AG04450 (cell line): ENCODE measurements at regions of chr9 and their contacts with region 1.

Region 1: DNA sequence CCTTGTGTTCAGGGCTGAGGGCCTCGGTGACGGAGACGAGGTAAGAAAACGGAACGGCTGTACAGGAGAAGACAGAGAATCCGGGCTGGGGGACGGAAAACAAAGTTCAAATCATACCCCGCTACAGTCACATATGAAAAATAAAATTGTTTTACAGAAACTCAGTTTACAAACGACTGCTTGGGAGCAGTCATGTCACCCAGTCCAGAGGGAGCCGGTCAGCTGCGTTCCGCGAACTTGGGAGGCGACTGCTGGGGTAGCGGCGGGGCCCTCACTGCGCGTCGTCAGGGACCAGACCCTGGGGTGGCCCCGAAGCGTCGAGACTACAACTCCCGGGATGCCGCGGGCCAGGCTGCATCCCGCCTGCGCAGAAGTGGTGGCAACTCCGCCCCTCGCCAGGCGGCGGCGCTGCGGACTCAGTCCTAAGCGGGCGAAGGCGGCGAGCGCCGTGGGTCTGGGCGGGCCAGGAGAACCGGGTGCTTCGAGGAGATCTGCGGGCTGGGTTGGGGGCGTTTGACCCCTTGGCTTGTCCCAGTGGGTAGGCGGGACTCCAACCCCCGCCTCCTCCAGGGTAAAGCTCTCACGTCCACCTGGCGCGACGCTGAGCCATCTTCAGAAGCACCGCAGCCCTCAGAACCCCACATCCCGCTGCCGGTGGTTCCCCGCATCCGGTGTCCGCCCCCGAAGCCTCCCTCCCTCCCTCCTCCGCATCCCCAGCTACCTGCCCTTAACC is 4.0 kb downstream of the SIT1 start:
- DNase-seq: peak; percentile 66
- H3K4me3 ChIP-seq: peak overlapping the region; percentile 73
- H3K27ac ChIP-seq: peak overlapping the region; percentile 11
- H3K27me3 ChIP-seq: no peaks in the 10 kb centered on the region
- CTCF ChIP-seq: peak; percentile 89

Region 2: GRCh38 chr9:35563791-35564197 is 82.9 kb before region 1 on chr9:
- CTCF ChIA-PET with region 1: no interaction called
- POLR2A ChIA-PET with region 1: no interaction called
- DNase-seq: no peak
- H3K4me3 ChIP-seq: no peak overlapping the region
- H3K27ac ChIP-seq: no peak overlapping the region
- H3K27me3 ChIP-seq: no peaks in the 10 kb centered on the region
- CTCF ChIP-seq: no peak

Region 3: DNA sequence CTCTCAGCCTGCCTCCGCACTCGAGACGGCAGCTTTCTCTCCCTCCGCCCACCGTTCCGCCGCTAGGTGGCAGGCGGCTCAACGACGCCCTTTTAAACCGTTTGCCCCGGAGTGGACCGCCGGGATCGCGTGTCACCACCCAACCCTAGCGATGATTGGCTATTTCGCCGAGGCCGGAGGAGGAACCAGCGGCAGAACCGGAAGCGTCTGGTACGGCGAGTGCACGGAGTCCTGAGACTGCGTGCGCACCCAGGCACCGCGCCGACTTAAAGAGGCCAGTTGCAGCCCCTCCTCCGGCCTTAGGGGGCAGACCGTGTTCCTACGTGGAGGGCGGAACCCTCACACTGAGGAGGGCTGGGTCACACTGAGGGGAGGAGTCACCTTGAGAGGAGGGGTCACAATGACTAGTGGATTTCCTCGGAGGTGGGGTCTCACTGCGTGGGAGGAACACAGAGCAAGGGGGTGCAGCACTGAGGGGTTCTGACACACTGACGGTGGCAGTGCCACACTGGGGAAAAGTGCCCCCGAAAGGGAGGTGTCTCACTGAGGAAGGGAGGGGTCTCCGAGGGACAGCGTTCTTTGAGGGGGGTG is 42.6 kb before region 1 on chr9:
- CTCF ChIA-PET with region 1: interaction called, 18 read pairs
- POLR2A ChIA-PET with region 1: interaction called, 4 read pairs
- DNase-seq: peak; percentile 99
- H3K4me3 ChIP-seq: peak overlapping the region; percentile 77
- H3K27ac ChIP-seq: peak overlapping the region; percentile 98
- H3K27me3 ChIP-seq: no peaks in the 10 kb centered on the region
- CTCF ChIP-seq: peak; percentile 86

Region 4: DNA sequence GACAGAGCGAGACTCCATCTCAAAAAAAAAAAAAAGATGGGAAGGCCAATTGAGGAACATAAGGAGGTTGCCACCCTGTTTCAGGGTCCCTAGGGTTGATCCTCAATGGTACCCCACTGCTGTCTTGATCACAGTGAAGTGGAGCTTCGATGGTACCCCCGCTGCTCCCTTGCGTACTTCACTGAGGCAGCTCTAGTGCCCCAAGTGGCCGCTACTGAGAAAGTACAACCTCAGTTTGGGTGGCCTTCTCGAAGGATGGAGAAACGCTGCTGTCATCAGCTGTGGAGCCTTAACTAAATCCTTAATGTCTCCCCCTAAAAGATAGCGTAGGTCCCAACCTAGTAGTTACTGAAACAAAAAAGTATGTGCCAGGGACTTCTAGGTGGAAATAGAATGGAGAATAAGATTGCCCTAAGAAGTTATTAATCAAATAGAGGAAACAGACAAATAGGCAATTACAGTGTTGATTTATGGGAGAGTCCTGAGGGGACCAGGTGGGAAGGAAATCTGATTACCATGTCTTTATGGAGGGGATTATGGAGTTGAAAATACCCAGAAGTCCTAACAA is 35.4 kb before region 1 on chr9:
- CTCF ChIA-PET with region 1: interaction called, 18 read pairs
- POLR2A ChIA-PET with region 1: interaction called, 4 read pairs
- DNase-seq: no peak
- H3K4me3 ChIP-seq: no peak overlapping the region
- H3K27ac ChIP-seq: no peak overlapping the region
- H3K27me3 ChIP-seq: peaks cover 23% of the 10 kb centered on the region
- CTCF ChIP-seq: peak; percentile 70

Region 5: GRCh38 chr9:35675732-35676392 is 29.2 kb after region 1 on chr9:
- CTCF ChIA-PET with region 1: no interaction called
- POLR2A ChIA-PET with region 1: interaction called, 11 read pairs
- DNase-seq: no peak
- H3K4me3 ChIP-seq: peak overlapping the region; percentile 51
- H3K27ac ChIP-seq: no peak overlapping the region
- H3K27me3 ChIP-seq: no peaks in the 10 kb centered on the region
- CTCF ChIP-seq: no peak